HEK293 (cell line): ENCODE measurements at regions of chr6 and their contacts with region 1.

Region 1: DNA sequence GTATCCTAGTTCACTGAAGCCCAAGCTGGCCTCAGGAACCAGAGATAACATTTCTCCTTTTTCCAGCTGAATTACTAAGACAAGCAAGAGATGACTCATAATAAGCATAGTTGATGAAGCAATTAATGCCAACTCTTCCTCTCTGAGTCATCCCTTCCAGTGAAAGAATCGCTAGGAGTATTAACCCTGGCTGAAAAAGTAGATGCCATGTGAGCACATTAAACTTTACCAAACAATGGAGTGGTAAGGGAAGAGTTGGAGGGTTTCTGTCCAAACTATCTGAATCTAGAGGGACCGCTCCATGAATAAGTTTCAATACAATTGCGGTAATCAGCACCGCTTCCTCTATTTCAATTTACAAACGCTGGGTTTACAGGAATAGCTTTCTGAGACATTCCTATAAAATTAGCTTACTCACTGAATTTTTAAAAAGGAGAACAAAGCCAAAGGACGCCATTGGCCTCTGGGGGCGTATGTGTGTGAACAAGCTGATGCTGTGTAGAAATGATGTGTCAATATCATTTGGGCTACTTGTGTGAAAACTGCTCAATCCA is 48.3 kb downstream of the ATXN1 start:
- H3K4me3 ChIP-seq: peak overlapping the region; percentile 29
- H3K27ac ChIP-seq: peak overlapping the region; percentile 91
- H3K4me1 ChIP-seq: peaks cover 35% of the 10 kb centered on the region
- CTCF ChIP-seq: 0 out of 2 replicates have a peak, but pooled peaks have one; percentile 28

Region 2: GRCh38 chr6:16723826-16724225 is 10.8 kb after region 1 on chr6:
- CTCF ChIA-PET with region 1: interaction called, 17 read pairs
- POLR2A ChIA-PET with region 1: interaction called, 6 read pairs
- H3K4me3 ChIP-seq: no peak overlapping the region
- H3K27ac ChIP-seq: peak overlapping the region; percentile 74
- H3K4me1 ChIP-seq: peaks cover 70% of the 10 kb centered on the region
- CTCF ChIP-seq: no peak

Region 3: GRCh38 chr6:16872543-16873235 is 159.7 kb after region 1 on chr6:
- CTCF ChIA-PET with region 1: no interaction called
- POLR2A ChIA-PET with region 1: no interaction called
- H3K4me3 ChIP-seq: no peak overlapping the region
- H3K27ac ChIP-seq: no peak overlapping the region
- H3K4me1 ChIP-seq: peaks cover 10% of the 10 kb centered on the region
- CTCF ChIP-seq: no peak